Stomach (tissue), 19 donors: ENCODE measurements at regions of chr9 and their contacts with region 1.

Region 1: GRCh38 chr9:98185611-98186171 is 6.7 kb downstream of the CORO2A start:
- DNase-seq: no peak
- H3K4me3 ChIP-seq: no peak overlapping the region
- H3K27ac ChIP-seq: no peak overlapping the region
- H3K4me1 ChIP-seq: peaks cover 0 to 26% (median 0%) of the 10 kb centered on the region in 4 donors
- H3K27me3 ChIP-seq: no peaks in the 10 kb centered on the region
- CTCF ChIP-seq: no peak
- EP300 ChIP-seq: no peak
- POLR2A ChIP-seq: no peak

Region 2: GRCh38 chr9:98097836-98098235 is 87.9 kb before region 1 on chr9:
- intact Hi-C with region 1: loop called (anchors 10 kb)
- DNase-seq: peak in 1 of 2 donors; percentile 57
- H3K4me3 ChIP-seq: no peak overlapping the region
- H3K27ac ChIP-seq: no peak overlapping the region
- H3K4me1 ChIP-seq: peaks cover 0 to 13% (median 5%) of the 10 kb centered on the region in 4 donors
- H3K27me3 ChIP-seq: no peaks in the 10 kb centered on the region
- CTCF ChIP-seq: no peak
- EP300 ChIP-seq: no peak
- POLR2A ChIP-seq: no peak

Region 3: DNA sequence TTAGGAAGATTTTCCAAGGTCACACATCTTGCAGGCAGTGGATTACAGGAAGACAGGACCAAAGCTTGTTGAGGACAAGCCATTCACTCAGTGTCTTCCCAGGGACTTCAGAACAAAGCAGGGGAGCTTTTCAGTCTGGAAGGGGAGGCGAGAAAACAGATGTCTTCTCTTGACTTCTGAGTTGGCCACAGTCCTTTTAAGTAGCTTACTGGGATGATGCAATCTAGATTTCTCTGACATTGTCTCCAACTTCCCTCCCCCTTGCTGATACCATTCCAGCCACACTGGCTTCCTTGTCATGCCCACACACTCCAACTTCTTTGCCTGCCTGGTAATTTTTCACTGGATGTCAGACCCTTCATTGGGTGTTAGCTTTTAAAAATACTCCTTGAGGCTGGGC is 243.9 kb after region 1 on chr9:
- intact Hi-C with region 1: no loop called
- DNase-seq: no peak
- H3K4me3 ChIP-seq: no peak overlapping the region
- H3K27ac ChIP-seq: no peak overlapping the region
- H3K4me1 ChIP-seq: no peaks in the 10 kb centered on the region
- H3K27me3 ChIP-seq: no peaks in the 10 kb centered on the region
- CTCF ChIP-seq: no peak
- EP300 ChIP-seq: no peak
- POLR2A ChIP-seq: no peak